ENCODE measurements at regions of chr5 and their contacts with region 1.

Region 1: GRCh38 chr5:168987543-168988300 is 313.2 kb downstream of the SLIT3 start:
- DNase-seq: peak in 4 of 5 donors; percentile 80 to 88 (median 84)
- H3K4me3 ChIP-seq: no peak overlapping the region
- H3K27ac ChIP-seq: no peak overlapping the region
- H3K4me1 ChIP-seq: no peaks in the 10 kb centered on the region
- H3K27me3 ChIP-seq: no peaks in the 10 kb centered on the region
- CTCF ChIP-seq: peak; percentile 89

Region 2: DNA sequence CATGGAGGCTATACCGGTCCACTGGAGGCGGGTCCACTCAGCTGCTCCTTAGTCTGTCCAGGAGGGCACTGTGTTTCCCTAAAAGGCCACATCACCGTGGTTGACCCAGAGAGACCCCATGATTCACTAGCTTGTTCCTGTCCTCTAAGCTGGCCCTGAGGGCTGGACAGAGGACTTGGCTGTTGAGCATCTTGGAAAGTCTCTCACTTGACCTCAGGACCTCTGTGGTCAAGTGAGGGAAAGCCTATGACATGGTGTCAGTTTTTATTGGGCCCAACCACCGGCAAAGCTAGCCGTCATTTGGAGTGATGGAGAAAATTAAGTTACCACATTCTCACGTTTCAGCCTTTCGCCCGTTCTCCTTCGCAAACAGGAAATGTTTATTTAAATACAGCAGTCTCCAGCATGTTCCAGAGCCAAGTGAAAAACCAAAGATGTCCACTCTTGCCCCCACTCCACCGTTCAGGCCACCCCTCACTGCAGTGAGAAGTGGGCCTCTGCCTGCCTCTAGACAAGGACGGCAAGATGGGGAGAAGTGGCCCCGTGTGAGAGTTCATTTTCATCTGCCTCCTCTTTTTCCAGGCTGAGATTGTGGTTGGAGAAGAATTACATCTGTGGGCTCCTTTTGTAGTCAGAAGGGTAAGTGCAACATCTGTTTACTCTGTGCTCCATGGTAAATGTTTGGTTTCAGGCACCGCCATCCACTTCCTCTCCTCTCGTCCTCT is 308.9 kb after region 1 on chr5:
- intact Hi-C with region 1: loop called (anchors 10 kb)
- DNase-seq: peak in 4 of 5 donors; percentile 35 to 83 (median 52)
- H3K4me3 ChIP-seq: no peak overlapping the region
- H3K27ac ChIP-seq: peak overlapping the region in 1 of 2 donors; percentile 14
- H3K4me1 ChIP-seq: no peaks in the 10 kb centered on the region
- H3K27me3 ChIP-seq: no peaks in the 10 kb centered on the region
- CTCF ChIP-seq: no peak

Region 3: DNA sequence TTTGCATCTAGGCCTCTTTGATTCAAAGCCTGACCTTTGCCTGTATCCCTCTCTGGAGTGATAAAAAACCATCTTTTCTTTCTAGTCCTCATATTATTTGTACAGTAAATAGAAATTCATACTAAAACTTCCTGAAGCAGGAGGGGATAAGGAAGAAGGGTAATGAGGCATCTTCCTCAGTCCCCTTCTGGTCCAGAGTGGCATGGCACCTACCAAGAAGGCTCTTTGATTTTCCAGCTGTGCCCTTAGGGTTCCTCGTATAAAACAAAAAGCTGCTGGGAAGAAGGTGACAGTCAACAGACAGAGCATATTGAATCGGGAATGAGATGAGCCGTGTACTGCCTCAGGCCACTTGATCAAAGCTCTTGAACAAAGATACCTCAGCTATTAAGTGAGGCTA is 524.0 kb after region 1 on chr5:
- intact Hi-C with region 1: no loop called
- DNase-seq: no peak
- H3K4me3 ChIP-seq: no peak overlapping the region
- H3K27ac ChIP-seq: no peak overlapping the region
- H3K4me1 ChIP-seq: no peaks in the 10 kb centered on the region
- H3K27me3 ChIP-seq: no peaks in the 10 kb centered on the region
- CTCF ChIP-seq: no peak

Measured in kidney (tissue), 22 donors.